ENCODE measurements at regions of chr2 and their contacts with region 1.

Region 1: DNA sequence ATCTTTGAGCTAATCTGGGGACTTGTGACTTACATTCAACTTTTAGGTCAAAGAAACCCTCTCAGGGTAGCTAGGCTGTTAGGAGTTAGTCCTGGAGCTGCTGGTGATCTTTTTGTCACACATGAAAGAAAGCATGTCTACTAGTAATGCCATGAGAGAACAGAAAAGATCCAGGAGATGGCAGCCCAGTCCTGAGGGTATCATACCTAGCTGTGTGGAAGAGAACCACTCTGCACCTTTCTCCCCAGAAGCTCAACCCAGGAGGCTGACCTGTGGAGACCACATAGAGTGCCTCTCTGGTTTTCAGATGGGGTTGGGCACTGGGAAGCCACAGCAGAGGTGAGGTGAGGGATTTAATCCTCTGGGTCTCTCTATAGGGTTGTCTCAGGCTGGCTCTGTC is 460.2 kb upstream of the UBE2E3 start:
- DNase-seq: peak; percentile 32
- H3K4me3 Mint-ChIP-seq: no peak overlapping the region
- H3K27ac Mint-ChIP-seq: no peak overlapping the region
- H3K4me1 Mint-ChIP-seq: peaks cover 93% of the 10 kb centered on the region
- H3K27me3 Mint-ChIP-seq: no peaks in the 10 kb centered on the region
- CTCF ChIP-seq: no peak

Region 2: DNA sequence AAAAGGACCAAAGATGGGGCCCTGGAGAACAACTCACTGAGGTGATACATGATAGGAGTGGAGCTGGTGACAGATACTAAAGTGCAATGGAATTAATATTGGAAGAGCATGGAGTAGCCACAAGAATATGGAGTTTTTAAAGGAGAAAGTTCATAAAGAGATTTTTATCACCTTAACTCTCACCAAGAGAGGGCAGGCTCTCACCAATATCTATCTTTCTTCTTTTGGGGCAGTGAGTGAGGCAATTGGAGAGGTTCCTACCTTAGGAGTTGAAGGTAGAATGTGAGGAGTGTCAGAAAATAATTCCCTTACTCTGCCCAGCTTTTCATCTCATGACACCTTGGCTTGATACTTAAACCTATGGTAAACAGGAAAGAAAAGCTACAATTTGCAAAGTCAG is 279.4 kb before region 1 on chr2:
- CTCF ChIA-PET with region 1: no interaction called
- intact Hi-C with region 1: loop called (anchors 2 kb)
- DNase-seq: peak; percentile 21
- H3K4me3 Mint-ChIP-seq: no peak overlapping the region
- H3K27ac Mint-ChIP-seq: no peak overlapping the region
- H3K4me1 Mint-ChIP-seq: peaks cover 8% of the 10 kb centered on the region
- H3K27me3 Mint-ChIP-seq: no peaks in the 10 kb centered on the region
- CTCF ChIP-seq: peak; percentile 45

Region 3: DNA sequence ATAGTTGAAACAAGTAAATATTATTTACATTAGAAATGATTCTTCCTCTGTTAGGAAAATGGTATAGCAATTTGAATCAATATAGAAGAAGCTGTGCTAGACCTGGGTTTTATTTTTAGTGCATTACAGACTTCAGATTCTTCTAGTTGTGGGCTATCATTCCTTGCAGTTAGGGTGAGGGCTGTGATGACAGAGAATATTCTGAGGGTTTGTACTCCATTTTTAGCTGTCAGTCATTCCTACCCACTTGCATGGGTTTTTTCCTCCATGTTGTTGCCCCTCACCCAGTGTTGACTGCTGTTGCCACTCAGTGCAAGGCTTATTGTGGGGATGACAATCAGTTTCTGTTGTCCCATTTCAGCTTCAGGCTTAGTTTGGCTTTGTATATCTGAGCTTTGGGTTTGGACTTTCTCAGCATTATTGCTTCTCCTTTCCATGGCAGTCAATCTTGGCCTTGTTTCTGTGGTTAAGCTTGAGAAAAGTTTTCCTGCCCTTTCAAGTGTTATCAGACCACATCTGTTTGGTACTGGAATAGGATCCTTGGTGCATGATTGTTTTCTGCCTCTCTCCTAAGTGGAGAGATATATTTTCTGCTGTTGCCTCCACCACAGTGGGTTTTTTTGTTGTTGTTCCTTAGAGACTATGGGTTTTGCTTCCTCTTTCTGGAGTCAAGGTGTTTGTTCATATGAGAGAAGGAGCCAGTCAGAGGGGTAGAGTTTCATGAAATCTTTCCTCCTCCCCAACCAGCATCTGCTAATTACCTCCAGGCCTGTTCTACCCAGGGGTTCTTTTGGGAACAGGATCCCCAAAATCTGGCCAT is 200.4 kb before region 1 on chr2:
- CTCF ChIA-PET with region 1: no interaction called
- intact Hi-C with region 1: no loop called
- DNase-seq: no peak
- H3K4me3 Mint-ChIP-seq: no peak overlapping the region
- H3K27ac Mint-ChIP-seq: no peak overlapping the region
- H3K4me1 Mint-ChIP-seq: peaks cover 8% of the 10 kb centered on the region
- H3K27me3 Mint-ChIP-seq: no peaks in the 10 kb centered on the region
- CTCF ChIP-seq: no peak

Region 4: GRCh38 chr2:180359522-180360282 is 160.5 kb before region 1 on chr2:
- CTCF ChIA-PET with region 1: no interaction called
- intact Hi-C with region 1: loop called (anchors 10 kb)
- DNase-seq: peak; percentile 30
- H3K4me3 Mint-ChIP-seq: no peak overlapping the region
- H3K27ac Mint-ChIP-seq: no peak overlapping the region
- H3K4me1 Mint-ChIP-seq: peaks cover 20% of the 10 kb centered on the region
- H3K27me3 Mint-ChIP-seq: no peaks in the 10 kb centered on the region
- CTCF ChIP-seq: peak; percentile 12

Region 5: GRCh38 chr2:180394305-180394704 is 125.9 kb before region 1 on chr2:
- CTCF ChIA-PET with region 1: no interaction called
- intact Hi-C with region 1: no loop called
- DNase-seq: no peak
- H3K4me3 Mint-ChIP-seq: no peak overlapping the region
- H3K27ac Mint-ChIP-seq: no peak overlapping the region
- H3K4me1 Mint-ChIP-seq: no peaks in the 10 kb centered on the region
- H3K27me3 Mint-ChIP-seq: no peaks in the 10 kb centered on the region
- CTCF ChIP-seq: no peak

Region 6: DNA sequence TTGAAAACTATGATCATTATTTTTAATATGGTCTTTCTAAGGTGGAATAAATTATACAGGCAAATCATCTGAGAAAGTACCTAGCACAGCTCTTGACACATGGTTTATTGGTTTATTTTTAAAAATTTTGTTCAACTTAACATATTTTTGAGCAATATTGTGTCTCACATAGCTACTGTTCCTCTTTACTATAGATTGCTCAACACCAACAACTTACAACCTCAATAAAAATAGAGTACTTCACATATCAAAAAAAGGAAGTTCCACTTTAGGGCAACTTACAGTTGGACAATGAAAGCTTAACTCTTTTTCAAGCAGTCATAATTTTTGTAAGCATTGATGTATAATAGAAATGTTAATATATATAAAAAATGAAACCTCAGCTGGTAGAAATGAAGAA is 19.3 kb after region 1 on chr2:
- CTCF ChIA-PET with region 1: no interaction called
- intact Hi-C with region 1: no loop called
- DNase-seq: no peak
- H3K4me3 Mint-ChIP-seq: no peak overlapping the region
- H3K27ac Mint-ChIP-seq: no peak overlapping the region
- H3K4me1 Mint-ChIP-seq: peaks cover 11% of the 10 kb centered on the region
- H3K27me3 Mint-ChIP-seq: no peaks in the 10 kb centered on the region
- CTCF ChIP-seq: no peak

Region 7: GRCh38 chr2:180573958-180574357 is 53.8 kb after region 1 on chr2:
- CTCF ChIA-PET with region 1: interaction called, 4 read pairs
- intact Hi-C with region 1: loop called (anchors 2 kb)
- DNase-seq: peak; percentile 30
- H3K4me3 Mint-ChIP-seq: peak overlapping the region; percentile 14
- H3K27ac Mint-ChIP-seq: peak overlapping the region; percentile 82
- H3K4me1 Mint-ChIP-seq: peaks cover 74% of the 10 kb centered on the region
- H3K27me3 Mint-ChIP-seq: no peaks in the 10 kb centered on the region
- CTCF ChIP-seq: no peak

Region 8: GRCh38 chr2:181058378-181059269 is 538.4 kb after region 1 on chr2:
- CTCF ChIA-PET with region 1: interaction called, 17 read pairs
- intact Hi-C with region 1: loop called (anchors 1 kb)
- DNase-seq: peak; percentile 41
- H3K4me3 Mint-ChIP-seq: no peak overlapping the region
- H3K27ac Mint-ChIP-seq: no peak overlapping the region
- H3K4me1 Mint-ChIP-seq: peaks cover 10% of the 10 kb centered on the region
- H3K27me3 Mint-ChIP-seq: no peaks in the 10 kb centered on the region
- CTCF ChIP-seq: peak; percentile 80

Measured in Calu3 (cell line).